ENCODE measurements at regions of chr12 and their contacts with region 1.

Region 1: DNA sequence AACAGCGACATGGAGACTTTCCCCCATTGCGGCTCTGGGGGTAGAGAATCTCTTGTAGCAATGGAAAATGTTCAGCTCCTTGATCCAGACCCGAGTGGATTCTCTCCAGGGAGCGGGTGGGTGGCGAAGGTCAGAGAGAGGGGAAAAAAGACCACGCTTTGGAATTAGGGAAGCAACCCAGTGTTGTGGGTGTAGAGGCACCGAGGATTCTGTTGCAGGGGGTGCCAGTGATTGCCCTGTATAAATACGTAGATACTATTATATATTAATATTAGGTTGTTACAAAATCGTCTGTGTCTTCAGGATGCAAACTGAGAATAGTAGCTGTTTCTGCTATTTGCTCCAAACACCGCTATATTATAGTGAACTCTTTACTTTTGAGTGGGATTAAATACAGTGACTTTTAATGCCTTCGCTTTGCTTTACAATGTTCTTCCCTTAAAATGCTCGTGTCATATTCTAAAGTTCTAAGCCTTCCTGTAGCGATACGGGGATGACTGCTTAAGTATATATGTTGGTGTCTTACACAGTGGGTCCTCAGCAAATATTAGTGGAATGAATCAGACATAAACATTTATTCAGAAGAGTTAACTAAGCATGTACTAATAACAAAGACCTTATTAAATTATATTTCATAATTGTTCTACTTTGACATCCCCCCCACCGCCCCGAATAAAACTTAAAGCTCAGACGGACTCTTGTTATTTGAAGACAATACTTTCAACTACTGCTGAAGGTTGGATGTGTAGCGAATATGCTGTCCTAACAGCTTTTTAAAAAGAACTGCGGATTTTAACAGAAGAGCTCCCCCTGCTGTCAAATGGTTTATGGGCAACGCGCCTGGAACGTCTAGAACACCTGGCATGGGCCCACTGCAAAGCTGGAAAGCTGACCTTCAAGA is 136.4 kb upstream of the KRAS start:
- DNase-seq: peak; percentile 91
- H3K4me3 ChIP-seq: peak overlapping the region; percentile 69
- H3K27ac ChIP-seq: peak overlapping the region; percentile 99
- H3K4me1 ChIP-seq: peaks cover 5% of the 10 kb centered on the region
- H3K27me3 ChIP-seq: no peaks in the 10 kb centered on the region
- CTCF ChIP-seq: peak; percentile 90

Region 2: DNA sequence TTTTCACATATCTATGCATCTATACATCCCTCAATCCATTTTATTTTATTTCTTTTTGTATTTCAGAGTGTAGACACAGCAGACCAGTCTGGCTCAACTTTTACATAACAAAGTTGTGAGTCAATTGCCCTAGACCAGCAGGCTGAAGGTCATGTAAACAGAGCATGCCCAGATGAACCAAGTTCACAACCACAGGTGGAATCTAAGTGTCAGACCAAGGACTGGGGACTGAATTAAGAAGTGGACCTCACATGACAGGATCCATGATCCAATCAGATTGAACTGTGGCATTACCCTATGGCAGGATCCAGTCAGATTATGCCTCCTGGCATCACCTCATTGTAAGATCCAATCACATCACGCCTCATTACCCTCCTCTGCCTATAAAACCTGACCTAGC is 1893.4 kb before region 1 on chr12:
- CTCF ChIA-PET with region 1: no interaction called
- POLR2A ChIA-PET with region 1: interaction called, 10 read pairs
- intact Hi-C with region 1: no loop called
- DNase-seq: peak; percentile 8
- H3K4me3 ChIP-seq: no peak overlapping the region
- H3K27ac ChIP-seq: no peak overlapping the region
- H3K4me1 ChIP-seq: no peaks in the 10 kb centered on the region
- H3K27me3 ChIP-seq: no peaks in the 10 kb centered on the region
- CTCF ChIP-seq: no peak

Region 3: GRCh38 chr12:24991209-24992049 is 395.7 kb before region 1 on chr12:
- CTCF ChIA-PET with region 1: interaction called, 4 read pairs
- POLR2A ChIA-PET with region 1: no interaction called
- intact Hi-C with region 1: loop called (anchors 1 kb)
- DNase-seq: peak; percentile 72
- H3K4me3 ChIP-seq: no peak overlapping the region
- H3K27ac ChIP-seq: no peak overlapping the region
- H3K4me1 ChIP-seq: no peaks in the 10 kb centered on the region
- H3K27me3 ChIP-seq: peaks cover 9% of the 10 kb centered on the region
- CTCF ChIP-seq: peak; percentile 72

Region 4: GRCh38 chr12:25208554-25208953 is 178.5 kb before region 1 on chr12:
- CTCF ChIA-PET with region 1: no interaction called
- POLR2A ChIA-PET with region 1: no interaction called
- intact Hi-C with region 1: loop called (anchors 1 kb)
- DNase-seq: no peak
- H3K4me3 ChIP-seq: no peak overlapping the region
- H3K27ac ChIP-seq: no peak overlapping the region
- H3K4me1 ChIP-seq: no peaks in the 10 kb centered on the region
- H3K27me3 ChIP-seq: no peaks in the 10 kb centered on the region
- CTCF ChIP-seq: no peak

Region 5: DNA sequence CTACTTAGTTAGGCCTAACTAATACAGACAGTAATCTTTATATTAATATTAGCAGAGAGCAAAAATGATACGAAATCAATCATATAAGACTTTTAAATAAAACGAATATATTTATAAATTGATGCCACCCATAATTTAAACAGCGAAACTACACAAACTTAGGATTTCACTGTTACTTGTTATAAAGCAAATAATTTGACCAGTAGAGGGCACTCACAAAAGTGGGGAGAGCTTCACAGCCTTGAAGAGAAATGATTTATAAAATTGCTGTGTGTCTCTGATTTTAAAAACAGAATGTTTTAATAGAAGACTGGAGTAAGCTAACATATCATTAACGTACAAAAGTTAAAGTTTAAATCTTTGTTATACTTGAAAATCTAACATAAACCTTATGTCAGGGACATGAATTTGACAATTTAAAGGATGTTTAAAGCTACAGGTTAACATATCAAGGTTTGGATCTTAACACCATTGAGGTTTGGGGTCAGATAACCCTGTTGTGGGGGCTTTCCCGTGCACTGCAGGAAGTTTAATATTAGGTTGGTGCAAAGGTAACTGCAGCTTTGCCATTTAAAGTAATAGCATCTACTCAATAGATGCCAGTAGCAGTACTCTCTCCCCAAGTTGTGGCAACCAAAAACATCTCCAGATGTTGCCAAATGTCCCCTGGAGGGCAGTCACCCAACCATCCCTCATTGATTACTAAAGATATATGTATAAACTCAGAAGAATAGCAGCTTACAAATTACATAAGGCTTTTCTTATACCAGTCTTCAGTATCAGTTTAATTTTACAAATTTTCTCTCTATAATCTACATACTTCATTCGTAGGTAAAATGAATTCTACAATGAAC is 145.7 kb before region 1 on chr12:
- CTCF ChIA-PET with region 1: interaction called, 13 read pairs
- POLR2A ChIA-PET with region 1: no interaction called
- intact Hi-C with region 1: no loop called
- DNase-seq: peak; percentile 60
- H3K4me3 ChIP-seq: no peak overlapping the region
- H3K27ac ChIP-seq: no peak overlapping the region
- H3K4me1 ChIP-seq: peaks cover under 1% of the 10 kb centered on the region
- H3K27me3 ChIP-seq: no peaks in the 10 kb centered on the region
- CTCF ChIP-seq: peak; percentile 86

Measured in A673 (cell line).